ENCODE measurements at regions of chr1 and their contacts with region 1.

Region 1: GRCh38 chr1:26284597-26285360 is 4.9 kb downstream of the SH3BGRL3 start:
- DNase-seq: peak; percentile 83
- H3K4me3 ChIP-seq: no peak overlapping the region
- H3K27ac ChIP-seq: peak overlapping the region; percentile 19
- H3K4me1 ChIP-seq: peaks cover 26% of the 10 kb centered on the region
- H3K27me3 ChIP-seq: no peaks in the 10 kb centered on the region
- CTCF ChIP-seq: peak; percentile 55 to 93
- POLR2A ChIP-seq: peak; percentile 46

Region 2: GRCh38 chr1:26233903-26234643 is 50.7 kb before region 1 on chr1 and contains the start of gene CEP85:
- CTCF ChIA-PET with region 1: interaction called, 15 read pairs
- POLR2A ChIA-PET with region 1: interaction called, 3 read pairs
- dilution Hi-C with region 1: no loop called
- intact Hi-C with region 1: no loop called
- DNase-seq: peak; percentile 98
- H3K4me3 ChIP-seq: peak within 1 kb of the TSS; percentile 35 to 78 (median 65)
- H3K27ac ChIP-seq: peak within 1 kb of the TSS; percentile 9
- H3K4me1 ChIP-seq: peaks cover 12% of the 10 kb centered on the region
- H3K27me3 ChIP-seq: no peaks in the 10 kb centered on the region
- CTCF ChIP-seq: peak; percentile 87 to 92
- POLR2A ChIP-seq: peak; percentile 81
- total RNA-seq, gene CEP85: 16.2 and 17.8 TPM in 2 replicates

Region 3: DNA sequence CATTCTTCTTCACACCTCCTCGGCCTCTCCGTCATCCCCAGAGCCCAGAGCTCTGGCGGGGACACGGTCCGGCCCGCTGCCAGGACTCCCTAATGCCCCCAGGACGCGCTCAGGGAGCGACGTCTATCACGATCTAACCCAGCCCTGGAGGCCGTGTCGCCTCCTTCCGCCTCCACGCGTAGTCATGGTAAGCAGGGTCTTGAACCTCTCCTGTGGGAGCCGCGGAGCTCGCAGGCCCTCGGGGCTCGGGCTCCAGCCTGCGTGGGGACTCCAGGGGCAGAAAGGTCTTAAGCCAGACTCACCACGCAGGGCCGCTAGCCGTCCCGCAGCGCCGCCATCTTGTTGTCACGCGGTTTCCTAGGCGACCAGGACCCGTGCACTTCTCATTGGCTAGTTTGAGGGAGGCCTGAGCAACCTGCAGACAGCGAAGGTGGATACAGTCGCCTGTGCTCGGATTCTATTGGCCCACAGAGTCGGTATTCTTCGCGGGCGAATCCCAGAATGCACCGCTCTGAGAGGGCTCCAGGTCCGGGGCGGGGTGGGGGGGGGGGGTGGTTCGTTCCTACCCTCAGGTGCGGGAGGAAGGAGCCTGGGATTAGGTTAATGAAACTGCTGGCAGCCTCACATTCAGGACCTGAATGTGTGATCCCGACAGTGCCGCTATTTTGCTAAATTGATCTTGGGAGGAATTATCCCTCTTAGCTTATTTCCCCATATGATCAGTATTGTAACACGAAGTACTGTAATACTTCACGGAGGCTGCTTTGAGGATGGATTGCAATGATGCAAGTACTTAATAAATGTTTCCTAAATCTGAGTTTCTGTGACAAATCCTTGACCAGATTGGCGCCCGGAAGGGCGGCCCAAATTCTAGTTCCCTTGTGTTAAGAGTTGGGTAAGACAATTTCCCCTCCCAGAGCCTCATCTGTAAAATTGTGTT is 21.8 kb after region 1 on chr1 and contains the start of gene UBXN11:
- CTCF ChIA-PET with region 1: interaction called, 18 read pairs
- POLR2A ChIA-PET with region 1: interaction called, 3 read pairs
- dilution Hi-C with region 1: no loop called
- intact Hi-C with region 1: loop called (anchors 1 kb)
- DNase-seq: peak; percentile 95
- H3K4me3 ChIP-seq: peak within 1 kb of the TSS; percentile 11 to 81 (median 62)
- H3K27ac ChIP-seq: peak within 1 kb of the TSS; percentile 9
- H3K4me1 ChIP-seq: peaks cover 10% of the 10 kb centered on the region
- H3K27me3 ChIP-seq: no peaks in the 10 kb centered on the region
- CTCF ChIP-seq: no peak
- POLR2A ChIP-seq: no peak
- total RNA-seq, gene UBXN11: 11.9 and 15.6 TPM in 2 replicates

Region 4: DNA sequence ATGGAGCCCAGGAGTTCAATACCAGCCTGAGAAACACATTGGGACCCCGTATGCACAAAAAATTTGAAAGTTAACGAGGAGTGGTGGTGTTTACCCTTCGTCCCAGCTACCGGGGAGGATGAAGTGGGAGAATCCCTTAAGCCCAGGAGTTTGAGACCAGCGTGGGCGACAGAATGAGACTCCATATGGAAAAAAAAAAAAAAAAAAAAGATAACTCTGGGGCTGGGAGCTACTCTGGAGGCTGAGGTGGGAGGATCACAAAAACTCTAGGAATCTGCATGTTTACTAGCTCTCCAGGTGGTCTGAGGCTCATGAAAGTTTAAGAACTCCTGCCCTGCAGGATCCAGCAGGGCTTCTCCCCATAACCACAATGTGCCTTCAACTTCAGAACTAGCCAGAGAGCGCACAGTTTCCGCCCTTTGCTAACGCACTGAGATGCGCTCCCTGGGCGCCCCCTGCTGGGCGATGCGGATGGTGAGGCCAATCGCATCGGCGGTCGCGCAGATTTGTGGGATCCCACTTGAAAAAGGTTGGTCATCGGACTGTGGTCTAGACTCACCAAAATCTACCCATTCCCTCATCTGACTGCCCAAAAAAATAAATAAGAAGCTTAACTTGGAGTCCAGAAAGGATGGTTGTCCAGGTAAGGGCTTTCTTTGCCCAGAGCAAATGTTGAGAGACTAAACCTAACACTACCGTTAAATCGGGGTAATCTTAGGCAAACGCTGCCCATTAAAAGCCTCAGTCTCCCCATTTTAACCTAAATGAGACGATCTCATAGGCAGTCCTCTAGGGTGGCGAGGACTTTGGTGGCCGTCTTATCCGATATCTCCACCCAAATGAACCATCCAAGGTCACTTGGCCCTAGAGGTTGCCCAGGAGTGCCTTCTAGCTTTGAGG is 79.0 kb after region 1 on chr1:
- CTCF ChIA-PET with region 1: interaction called, 35 read pairs
- POLR2A ChIA-PET with region 1: no interaction called
- dilution Hi-C with region 1: no loop called
- intact Hi-C with region 1: loop called (anchors 2 kb)
- DNase-seq: peak; percentile 67
- H3K4me3 ChIP-seq: no peak overlapping the region
- H3K27ac ChIP-seq: no peak overlapping the region
- H3K4me1 ChIP-seq: no peaks in the 10 kb centered on the region
- H3K27me3 ChIP-seq: peaks cover 18 to 23% of the 10 kb centered on the region in 2 experiments
- CTCF ChIP-seq: peak; percentile 96 to 99
- POLR2A ChIP-seq: no peak

Measured in endothelial cell of umbilical vein (primary cell).